ENCODE measurements at regions of chr3 and their contacts with region 1.

Region 1: GRCh38 chr3:187150599-187150998 is 11.3 kb upstream of the RPL39L start:
- DNase-seq: peak; percentile 38 to 65 (median 64)
- H3K4me3 ChIP-seq: no peak overlapping the region
- H3K27ac ChIP-seq: no peak overlapping the region
- H3K4me1 ChIP-seq: no peaks in the 10 kb centered on the region
- H3K27me3 ChIP-seq: no peaks in the 10 kb centered on the region

Region 2: DNA sequence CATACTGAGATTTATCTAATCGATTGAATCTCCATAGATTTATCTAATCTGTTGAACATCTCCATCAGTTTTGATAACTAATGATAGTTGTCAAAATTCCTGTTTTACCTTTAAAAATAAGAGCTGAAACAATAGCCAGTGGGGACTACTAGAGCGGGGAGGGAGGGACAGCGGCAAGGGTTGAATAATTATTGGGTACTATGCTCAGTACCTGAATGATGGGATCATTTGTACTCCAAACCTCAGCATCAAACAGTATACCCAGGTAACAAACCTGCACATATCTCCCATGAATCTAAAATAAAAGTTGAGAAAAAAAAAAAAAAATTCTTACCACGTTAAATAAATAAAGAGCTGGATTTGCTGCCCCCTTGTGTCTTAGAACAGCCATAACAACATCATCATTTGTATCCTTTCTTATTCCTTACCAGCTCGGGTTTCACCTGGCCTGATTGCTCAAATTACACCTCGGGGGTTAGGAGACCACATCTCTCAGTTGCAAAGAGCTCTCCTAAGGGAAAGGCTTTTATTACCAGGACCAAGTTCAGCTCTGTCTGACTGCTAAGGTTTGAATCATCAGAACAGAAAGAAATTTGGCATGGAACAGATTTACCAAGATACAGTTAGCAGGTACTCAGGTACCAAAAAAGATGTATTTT is 14.4 kb after region 1 on chr3:
- CTCF ChIA-PET with region 1: interaction called, 23 read pairs
- POLR2A ChIA-PET with region 1: interaction called, 4 read pairs
- DNase-seq: peak; percentile 70 to 88 (median 78)
- H3K4me3 ChIP-seq: no peak overlapping the region
- H3K27ac ChIP-seq: no peak overlapping the region
- H3K4me1 ChIP-seq: peaks cover 0 to under 1% (median 0%) of the 10 kb centered on the region in 4 experiments
- H3K27me3 ChIP-seq: no peaks in the 10 kb centered on the region

Region 3: GRCh38 chr3:187186801-187187421 is 36.3 kb after region 1 on chr3:
- CTCF ChIA-PET with region 1: no interaction called
- POLR2A ChIA-PET with region 1: no interaction called
- DNase-seq: peak in 1 of 3 donors; percentile 11
- H3K4me3 ChIP-seq: no peak overlapping the region
- H3K27ac ChIP-seq: no peak overlapping the region
- H3K4me1 ChIP-seq: peaks cover 0 to 8% (median 1%) of the 10 kb centered on the region in 4 experiments
- H3K27me3 ChIP-seq: peaks cover 0 to 3% (median 2%) of the 10 kb centered on the region in 5 experiments